Ovary (tissue), 10 donors: ENCODE measurements at regions of chr7 and their contacts with region 1.

Region 1: GRCh38 chr7:71237945-71238344 is 106.0 kb downstream of the GALNT17 start:
- DNase-seq: peak in 4 of 5 donors; percentile 39 to 53 (median 44)
- H3K4me3 ChIP-seq: no peak overlapping the region
- H3K27ac ChIP-seq: peak overlapping the region; percentile 13 to 71
- H3K4me1 ChIP-seq: peaks cover 26% of the 10 kb centered on the region
- H3K27me3 ChIP-seq: no peaks in the 10 kb centered on the region
- CTCF ChIP-seq: no peak
- EP300 ChIP-seq: no peak
- POLR2A ChIP-seq: no peak

Region 2: GRCh38 chr7:71131256-71132126 is 106.5 kb before region 1 on chr7:
- intact Hi-C with region 1: loop called in 1 of 4 experiments (anchors 10 kb)
- DNase-seq: peak; percentile 82 to 86 (median 85)
- H3K4me3 ChIP-seq: peak overlapping the region; percentile 60
- H3K27ac ChIP-seq: peak overlapping the region; percentile 73 to 87
- H3K4me1 ChIP-seq: peaks cover 8% of the 10 kb centered on the region
- H3K27me3 ChIP-seq: no peaks in the 10 kb centered on the region
- CTCF ChIP-seq: peak in 2 of 3 donors; percentile 49 to 55
- EP300 ChIP-seq: no peak
- POLR2A ChIP-seq: peak; percentile 38

Region 3: GRCh38 chr7:71145906-71146901 is 91.7 kb before region 1 on chr7:
- intact Hi-C with region 1: no loop called
- DNase-seq: peak in 3 of 5 donors; percentile 26 to 49 (median 42)
- H3K4me3 ChIP-seq: no peak overlapping the region
- H3K27ac ChIP-seq: no peak overlapping the region
- H3K4me1 ChIP-seq: peaks cover 10% of the 10 kb centered on the region
- H3K27me3 ChIP-seq: no peaks in the 10 kb centered on the region
- CTCF ChIP-seq: no peak
- EP300 ChIP-seq: no peak
- POLR2A ChIP-seq: no peak

Region 4: DNA sequence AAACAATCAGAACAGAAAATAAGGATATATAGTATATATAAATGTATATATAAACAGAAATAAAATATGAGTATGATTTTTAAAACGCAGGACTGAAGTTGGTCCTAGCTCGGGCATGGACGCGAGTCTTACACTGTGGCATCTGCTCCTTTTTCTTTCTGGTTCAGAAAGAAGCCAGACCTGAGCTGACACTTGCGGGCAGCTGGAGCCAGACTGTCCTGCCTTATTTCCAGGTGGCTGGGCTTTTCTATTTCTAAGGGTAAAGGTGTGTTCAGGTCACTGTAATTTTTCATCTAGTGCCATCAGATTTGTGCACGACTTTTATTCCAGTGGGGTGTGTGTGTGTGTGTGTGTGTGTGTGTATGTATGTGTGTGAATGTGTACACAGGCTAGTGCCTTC is 60.4 kb after region 1 on chr7:
- intact Hi-C with region 1: loop called in 1 of 4 experiments (anchors 5 kb)
- DNase-seq: no peak
- H3K4me3 ChIP-seq: no peak overlapping the region
- H3K27ac ChIP-seq: no peak overlapping the region
- H3K4me1 ChIP-seq: peaks cover 7% of the 10 kb centered on the region
- H3K27me3 ChIP-seq: no peaks in the 10 kb centered on the region
- CTCF ChIP-seq: no peak
- EP300 ChIP-seq: no peak
- POLR2A ChIP-seq: no peak